GM13976 (cell line): ENCODE measurements at regions of chr3 and their contacts with region 1.

Region 1: GRCh38 chr3:132730891-132731580 is 8.8 kb upstream of the NPHP3 start:
- DNase-seq: peak; percentile 12
- CTCF ChIP-seq: peak; percentile 19

Region 2: DNA sequence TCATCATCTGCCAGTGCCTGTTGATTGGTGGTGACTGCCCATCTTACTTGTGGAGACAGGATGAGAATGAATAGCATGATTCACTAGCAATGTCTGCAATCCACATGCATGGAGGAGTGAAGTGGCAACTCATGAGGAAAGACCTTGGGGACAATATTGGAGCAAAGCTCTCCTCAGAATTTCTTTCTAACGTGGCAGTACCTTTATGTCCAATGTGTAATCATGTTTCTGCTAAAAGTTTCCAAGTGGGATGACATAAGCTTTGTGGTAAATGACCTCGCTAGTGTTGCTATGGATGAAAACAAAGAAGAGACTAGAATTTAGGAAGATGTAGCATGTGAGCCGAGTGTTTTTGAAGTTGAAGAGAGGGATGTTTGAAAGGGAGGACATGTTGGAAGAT is 814.0 kb before region 1 on chr3:
- in situ Hi-C with region 1: no loop called
- DNase-seq: no peak
- CTCF ChIP-seq: no peak

Region 3: GRCh38 chr3:132879636-132880035 is 148.6 kb after region 1 on chr3:
- in situ Hi-C with region 1: no loop called
- DNase-seq: no peak
- CTCF ChIP-seq: no peak

Region 4: GRCh38 chr3:132987396-132987795 is 256.4 kb after region 1 on chr3:
- in situ Hi-C with region 1: no loop called
- DNase-seq: no peak
- CTCF ChIP-seq: no peak

Region 5: DNA sequence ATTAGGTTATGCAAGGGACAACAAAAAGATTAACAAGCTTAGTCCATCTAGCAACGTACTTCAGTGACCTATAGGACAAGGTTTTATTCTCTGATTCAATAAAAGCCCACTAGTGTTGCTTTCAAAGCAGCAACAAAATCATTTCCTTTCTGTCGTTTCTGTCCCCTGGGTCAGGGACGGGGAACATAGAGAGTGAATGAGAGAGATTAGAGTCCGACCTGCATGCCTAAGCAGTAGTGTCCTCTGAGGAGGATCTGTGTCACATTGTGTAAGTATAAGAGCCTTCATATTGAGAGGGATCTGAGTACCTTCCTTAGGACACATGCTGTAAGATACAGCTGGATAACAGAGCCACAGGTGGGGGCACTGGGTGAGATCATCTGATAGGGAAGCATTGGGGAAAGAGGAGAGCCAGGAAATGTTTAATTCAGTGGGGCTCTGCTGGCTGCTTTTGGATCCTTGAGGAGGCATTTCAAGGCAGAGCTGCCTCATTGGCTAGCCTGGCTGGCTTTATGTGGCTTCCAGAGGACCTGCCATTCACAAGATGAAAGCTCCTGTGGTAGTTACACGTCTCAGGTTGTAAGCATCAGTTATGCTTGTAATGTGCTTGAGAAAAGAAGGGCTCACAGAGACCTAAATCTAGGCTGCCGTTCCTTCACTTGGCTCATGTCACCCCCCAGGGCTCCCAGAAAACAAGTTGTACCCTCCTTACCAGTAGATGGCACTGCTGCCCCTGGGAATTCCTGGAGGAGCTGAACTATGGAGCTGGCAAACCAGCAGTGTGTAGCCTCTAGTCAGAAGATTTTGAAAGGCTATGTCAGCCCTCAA is 309.9 kb after region 1 on chr3:
- in situ Hi-C with region 1: loop called (anchors 25 kb)
- DNase-seq: peak; percentile 66
- CTCF ChIP-seq: peak; percentile 54

Region 6: DNA sequence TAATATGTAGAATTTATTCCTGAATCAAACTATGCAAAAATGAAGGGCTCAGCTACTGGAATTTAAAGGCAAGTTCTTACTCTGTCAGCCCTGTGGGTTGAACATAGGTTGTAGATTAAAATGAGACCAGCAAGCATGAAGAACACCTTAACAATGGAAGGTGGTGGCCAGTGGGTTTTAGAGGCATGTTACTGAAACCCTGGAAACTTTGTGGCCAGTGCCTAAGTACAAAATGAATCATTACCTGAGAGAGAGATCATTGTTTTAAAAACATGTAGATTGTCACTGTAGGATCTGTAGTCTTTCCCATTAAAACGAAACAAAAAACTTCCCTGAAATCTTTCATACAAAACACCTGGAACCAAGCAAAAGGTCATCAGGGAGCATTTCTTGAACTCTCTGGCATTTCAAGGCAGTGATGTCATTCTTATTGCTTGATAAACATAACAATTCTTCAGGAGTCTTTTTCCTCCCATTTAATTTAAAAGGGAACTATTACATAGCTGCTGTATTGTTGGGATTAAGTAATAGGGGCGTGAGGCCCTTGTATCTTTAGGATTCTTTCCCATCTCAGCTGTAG is 359.0 kb after region 1 on chr3:
- in situ Hi-C with region 1: no loop called
- DNase-seq: no peak
- CTCF ChIP-seq: no peak

Region 7: DNA sequence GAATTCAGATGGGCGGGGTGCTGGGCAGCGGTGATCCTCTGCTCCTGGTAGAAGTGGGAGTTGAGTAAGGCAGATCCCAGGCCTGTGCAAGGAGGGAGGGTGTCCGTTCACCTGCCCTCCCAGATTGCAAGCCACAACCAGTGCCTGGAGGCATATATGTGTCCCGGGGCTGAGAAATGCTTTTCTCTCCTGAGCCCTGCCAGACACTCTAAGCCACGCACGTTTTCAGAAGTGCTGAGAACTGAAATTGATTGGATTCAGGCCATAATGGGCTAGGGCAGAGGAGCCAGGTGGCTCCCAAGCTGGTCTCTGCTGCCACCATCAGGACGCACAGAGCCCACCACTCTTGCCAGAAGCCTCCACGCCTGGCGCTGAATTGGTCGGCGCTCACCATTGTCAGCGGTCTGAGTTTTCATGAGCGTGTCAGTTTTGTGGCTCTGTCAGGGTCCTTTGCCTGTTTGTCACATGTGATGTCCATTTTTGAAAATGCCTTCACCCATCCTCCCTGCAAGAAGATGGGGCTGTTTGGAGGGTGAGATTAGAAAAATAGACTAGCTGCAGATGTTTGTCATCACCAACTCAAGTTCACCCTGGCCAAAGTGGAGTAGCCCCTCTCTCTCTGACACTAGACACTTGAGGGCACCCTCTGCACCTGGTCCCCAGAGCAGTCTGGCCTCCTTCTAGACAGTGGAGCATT is 653.4 kb after region 1 on chr3:
- in situ Hi-C with region 1: loop called (anchors 10 kb)
- DNase-seq: peak; percentile 71
- CTCF ChIP-seq: peak; percentile 50